Left cardiac atrium (tissue), 4 donors: ENCODE measurements at regions of chr1 and their contacts with region 1.

Region 1: GRCh38 chr1:10867138-10867721 is 70.8 kb upstream of the CASZ1 start:
- DNase-seq: peak; percentile 70
- ATAC-seq: peak; percentile 86 to 90

Region 2: DNA sequence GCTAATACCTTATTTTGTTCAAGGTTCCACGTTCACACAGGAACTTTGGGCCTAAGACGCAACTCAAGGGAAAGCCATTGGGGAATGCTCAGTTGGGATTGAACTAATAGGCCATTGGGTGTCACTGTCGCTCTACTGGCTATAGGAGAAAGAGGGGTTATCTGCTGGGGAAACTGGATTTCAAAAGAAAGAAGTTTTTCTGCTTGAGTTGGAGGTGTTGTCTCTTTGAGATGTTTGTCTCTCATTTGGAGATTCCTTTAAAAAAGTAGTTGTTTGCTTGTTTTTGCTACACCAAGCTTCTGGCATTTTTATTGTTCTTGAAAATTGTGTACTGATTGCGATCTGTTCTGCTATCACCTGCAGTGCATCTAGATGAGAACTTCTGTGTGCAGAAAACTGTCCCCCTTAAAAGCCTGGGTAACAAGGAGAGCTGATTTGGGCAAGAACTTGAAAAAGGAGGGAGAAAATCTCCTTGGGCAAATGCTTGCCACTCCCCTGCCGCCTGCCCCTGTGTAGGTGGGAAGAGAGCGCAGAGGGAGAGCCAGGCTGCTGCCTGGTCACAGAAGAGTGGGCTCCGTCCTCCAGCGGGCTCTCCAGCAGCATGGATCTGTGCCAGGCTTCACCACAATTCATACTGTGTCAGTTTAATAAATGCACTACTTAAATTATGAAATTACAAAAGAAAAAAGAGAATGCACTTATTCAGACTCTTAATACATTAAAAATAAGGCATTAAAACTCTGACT is 352.6 kb before region 1 on chr1:
- intact Hi-C with region 1: loop called (anchors 5 kb)
- DNase-seq: no peak
- ATAC-seq: no peak

Region 3: GRCh38 chr1:10686404-10687040 is 180.7 kb before region 1 on chr1:
- intact Hi-C with region 1: loop called in 1 of 2 experiments (anchors 5 kb)
- DNase-seq: no peak
- ATAC-seq: no peak

Region 4: GRCh38 chr1:10824821-10825423 is 42.3 kb before region 1 on chr1:
- intact Hi-C with region 1: loop called in 1 of 2 experiments (anchors 5 kb)
- DNase-seq: no peak
- ATAC-seq: peak in 1 of 2 donors; percentile 76